ENCODE measurements at regions of chr22 and their contacts with region 1.

Region 1: DNA sequence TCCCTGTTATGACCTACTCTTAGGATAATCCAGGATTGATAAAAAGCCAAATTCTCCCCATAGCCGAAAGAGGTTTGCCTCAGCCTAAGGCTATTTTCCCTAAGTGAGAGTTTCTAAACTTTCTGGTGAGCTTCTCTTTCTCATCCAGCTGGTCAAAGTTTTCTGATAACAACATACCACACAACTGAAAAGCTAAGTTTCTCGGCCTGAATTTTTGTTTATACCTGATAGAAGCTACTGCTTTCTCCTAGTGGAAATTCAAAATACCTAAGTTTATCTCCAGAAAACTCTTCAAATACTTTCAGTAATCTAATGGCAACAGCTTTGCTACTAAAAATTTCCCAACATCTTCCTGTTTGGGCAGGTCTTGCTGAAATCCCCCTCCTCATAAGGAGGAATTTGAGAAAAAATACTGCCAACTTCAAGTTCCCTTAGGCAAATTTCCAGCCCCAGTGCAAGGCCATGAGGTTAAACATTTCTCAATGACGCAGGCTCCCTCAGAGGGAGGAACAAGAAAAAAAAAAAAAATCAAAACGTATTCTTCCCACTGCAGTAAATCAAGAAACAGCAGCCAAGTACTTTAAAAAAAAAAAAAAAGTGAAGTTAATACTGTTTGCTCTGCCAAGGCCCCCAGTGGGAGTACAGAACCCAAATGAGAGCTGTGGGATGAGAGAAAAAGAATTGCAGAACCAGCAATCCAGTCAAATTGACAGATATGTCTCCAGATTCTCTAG is 127.0 kb downstream of the MRTFA start:
- DNase-seq: peak in 1 of 2 donors; percentile 75
- H3K4me3 ChIP-seq: peak overlapping the region in 1 of 2 donors; percentile 11
- H3K27ac ChIP-seq: peak overlapping the region; percentile 87 to 88
- H3K4me1 ChIP-seq: peaks cover 28 to 58% of the 10 kb centered on the region in 2 donors
- H3K27me3 ChIP-seq: no peaks in the 10 kb centered on the region
- CTCF ChIP-seq: no peak

Region 2: DNA sequence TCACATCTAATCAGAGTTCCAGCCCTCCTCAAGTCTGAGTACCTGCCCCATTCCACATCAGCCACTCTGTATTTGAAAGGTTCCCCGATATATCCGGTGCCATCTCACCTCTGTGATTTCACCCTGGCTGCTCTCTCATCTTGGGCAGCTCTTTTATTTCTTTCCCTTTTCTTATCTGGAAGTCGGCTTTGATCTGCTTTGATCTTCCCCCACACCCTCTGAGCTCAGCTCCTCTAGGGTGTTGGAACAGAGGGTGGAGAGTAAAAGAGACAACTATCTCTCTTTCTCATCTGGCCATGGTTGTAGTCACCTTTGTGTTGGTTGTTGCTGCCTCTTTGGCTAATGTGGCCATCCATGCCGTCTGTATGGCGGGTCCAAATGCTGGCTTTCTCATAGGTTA is 724.3 kb before region 1 on chr22:
- intact Hi-C with region 1: no loop called
- DNase-seq: no peak
- H3K4me3 ChIP-seq: no peak overlapping the region
- H3K27ac ChIP-seq: no peak overlapping the region
- H3K4me1 ChIP-seq: no peaks in the 10 kb centered on the region
- H3K27me3 ChIP-seq: no peaks in the 10 kb centered on the region
- CTCF ChIP-seq: no peak

Region 3: DNA sequence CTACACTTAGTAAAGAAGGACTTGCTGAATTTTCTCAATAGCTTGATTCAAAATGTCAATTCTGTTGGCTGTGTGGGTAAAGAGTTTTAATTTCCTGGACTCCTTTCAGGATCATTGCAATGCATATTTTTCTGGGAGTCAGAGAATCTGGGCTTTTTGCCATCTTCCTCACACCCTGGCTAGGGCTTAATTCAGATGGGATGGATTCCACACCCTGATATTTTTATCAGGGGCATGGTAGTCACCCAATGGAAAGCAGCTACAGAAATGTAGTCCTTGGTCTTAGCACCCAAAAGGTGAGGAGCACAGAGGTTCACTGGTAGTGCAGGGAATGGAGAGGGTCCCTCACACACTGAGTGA is 59.9 kb before region 1 on chr22:
- intact Hi-C with region 1: loop called (anchors 2 kb)
- DNase-seq: no peak
- H3K4me3 ChIP-seq: no peak overlapping the region
- H3K27ac ChIP-seq: peak overlapping the region; percentile 43 to 81
- H3K4me1 ChIP-seq: peaks cover 6 to 35% of the 10 kb centered on the region in 2 donors
- H3K27me3 ChIP-seq: no peaks in the 10 kb centered on the region
- CTCF ChIP-seq: no peak

Region 4: GRCh38 chr22:40519948-40520331 is 10.4 kb after region 1 on chr22:
- intact Hi-C with region 1: no loop called
- DNase-seq: no peak
- H3K4me3 ChIP-seq: no peak overlapping the region
- H3K27ac ChIP-seq: no peak overlapping the region
- H3K4me1 ChIP-seq: peaks cover 0 to 33% of the 10 kb centered on the region in 2 donors
- H3K27me3 ChIP-seq: no peaks in the 10 kb centered on the region
- CTCF ChIP-seq: no peak

Region 5: DNA sequence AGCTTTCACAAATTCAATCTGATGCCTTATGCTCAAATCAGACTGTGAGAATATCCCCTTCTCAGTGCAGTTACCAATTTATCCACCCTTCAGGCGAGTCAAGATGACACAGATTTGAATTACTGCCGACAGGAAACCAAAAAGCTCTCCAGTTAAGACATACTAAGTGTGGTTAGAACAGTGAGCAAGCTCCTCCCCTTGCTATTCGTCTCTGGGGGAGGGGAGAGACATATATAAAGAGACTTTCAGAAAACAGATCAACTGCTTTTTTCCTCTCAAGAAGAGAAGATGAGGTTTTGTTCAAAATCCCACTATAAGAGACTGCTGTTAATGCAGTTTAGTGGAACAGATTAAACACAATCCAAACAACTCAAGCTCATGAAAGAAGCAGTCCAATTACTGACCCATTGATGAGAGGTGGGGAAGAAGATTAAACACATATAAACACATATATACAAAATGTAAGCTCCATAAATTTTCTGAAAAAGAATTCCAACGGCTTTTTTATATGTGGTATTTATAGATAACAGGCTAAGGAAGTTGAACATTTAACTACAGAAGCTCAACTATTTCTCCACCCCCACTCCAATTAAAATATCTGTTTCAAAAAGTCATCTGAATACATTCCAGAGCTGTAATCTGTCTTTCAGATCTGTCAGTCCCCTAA is 24.3 kb after region 1 on chr22:
- intact Hi-C with region 1: loop called (anchors 2 kb)
- DNase-seq: no peak
- H3K4me3 ChIP-seq: peak overlapping the region; percentile 37 to 50
- H3K27ac ChIP-seq: peak overlapping the region; percentile 79 to 92
- H3K4me1 ChIP-seq: peaks cover 5 to 41% of the 10 kb centered on the region in 2 donors
- H3K27me3 ChIP-seq: no peaks in the 10 kb centered on the region
- CTCF ChIP-seq: no peak

Region 6: DNA sequence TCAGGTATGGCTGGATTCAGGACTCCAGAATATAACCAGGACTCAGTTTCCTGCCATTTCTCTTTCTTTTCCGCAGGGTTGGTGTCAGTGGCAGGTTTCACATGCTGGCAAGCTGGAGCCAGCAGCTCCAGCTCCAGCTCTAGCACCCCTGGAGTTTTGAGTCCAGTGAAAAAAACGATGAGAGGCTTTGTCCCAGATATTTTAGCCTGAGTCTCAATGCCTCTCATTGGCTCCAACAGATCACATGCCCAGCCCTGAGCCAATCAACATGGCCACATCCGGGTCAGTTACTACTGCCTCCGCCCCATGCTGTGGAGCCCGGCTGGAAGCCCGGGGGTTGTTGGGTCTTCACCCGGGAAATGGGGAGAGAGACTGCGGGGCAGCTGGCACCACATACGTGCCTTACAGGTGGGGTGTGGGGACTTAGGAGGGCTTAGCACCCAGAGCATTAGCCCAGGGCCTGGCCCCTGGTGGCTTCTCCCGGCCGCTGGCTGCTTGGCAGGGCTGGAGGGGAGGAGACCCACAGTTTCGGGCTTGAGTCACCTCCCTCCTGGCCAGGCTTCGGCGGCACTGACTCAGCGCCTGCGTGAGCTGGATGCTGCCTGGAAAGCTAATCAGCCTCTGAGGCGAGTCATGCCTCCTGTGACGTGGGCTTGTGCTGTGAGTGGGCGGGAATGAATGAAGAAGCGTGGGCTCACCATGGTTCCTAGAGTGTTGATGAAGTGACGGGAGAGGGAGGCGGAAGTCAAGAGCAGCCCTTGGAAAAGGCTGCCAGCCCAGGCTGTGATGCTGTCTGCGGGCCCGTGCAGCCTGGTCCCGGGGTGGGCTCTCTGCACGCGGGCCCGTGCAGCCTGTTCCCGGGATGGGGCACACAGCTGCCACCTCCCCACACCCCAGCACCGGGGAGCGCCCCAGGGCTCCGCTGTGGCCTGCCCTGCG is 142.3 kb after region 1 on chr22:
- intact Hi-C with region 1: loop called (anchors 2 kb)
- DNase-seq: peak; percentile 95 to 99
- H3K4me3 ChIP-seq: peak overlapping the region; percentile 68 to 70
- H3K27ac ChIP-seq: peak overlapping the region; percentile 97
- H3K4me1 ChIP-seq: peaks cover 5 to 26% of the 10 kb centered on the region in 2 donors
- H3K27me3 ChIP-seq: no peaks in the 10 kb centered on the region
- CTCF ChIP-seq: peak in 1 of 3 experiments; percentile 4

Measured in ascending aorta (tissue), 2 donors.